ENCODE measurements at regions of chr17 and their contacts with region 1.

Region 1: GRCh38 chr17:43483674-43484372 is at the start of gene DHX8:
- DNase-seq: peak; percentile 97 to 98
- H3K4me3 ChIP-seq: peak within 1 kb of the TSS; percentile 61 to 72
- H3K27ac ChIP-seq: peak within 1 kb of the TSS; percentile 86
- H3K4me1 ChIP-seq: peaks cover 40% of the 10 kb centered on the region
- H3K27me3 ChIP-seq: no peaks in the 10 kb centered on the region
- CTCF ChIP-seq: peak; percentile 100
- POLR2A ChIP-seq: peak in 1 of 2 donors; percentile 29
- total RNA-seq, gene DHX8: 32.7 TPM

Region 2: GRCh38 chr17:43393944-43394482 is 89.8 kb before region 1 on chr17:
- intact Hi-C with region 1: loop called (anchors 2 kb)
- DNase-seq: no peak
- H3K4me3 ChIP-seq: peak overlapping the region in 1 of 2 donors; percentile 14
- H3K27ac ChIP-seq: peak overlapping the region; percentile 68
- H3K4me1 ChIP-seq: peaks cover 14% of the 10 kb centered on the region
- H3K27me3 ChIP-seq: no peaks in the 10 kb centered on the region
- CTCF ChIP-seq: peak; percentile 88 to 98 (median 97)
- POLR2A ChIP-seq: no peak

Region 3: GRCh38 chr17:45197555-45198334 is 1713.9 kb after region 1 on chr17:
- intact Hi-C with region 1: no loop called
- DNase-seq: no peak
- H3K4me3 ChIP-seq: no peak overlapping the region
- H3K27ac ChIP-seq: peak overlapping the region; percentile 75
- H3K4me1 ChIP-seq: peaks cover 33% of the 10 kb centered on the region
- H3K27me3 ChIP-seq: no peaks in the 10 kb centered on the region
- CTCF ChIP-seq: peak; percentile 83 to 99 (median 99)
- POLR2A ChIP-seq: no peak